SK-N-SH (cell line): ENCODE measurements at regions of chr22 and their contacts with region 1.

Region 1: DNA sequence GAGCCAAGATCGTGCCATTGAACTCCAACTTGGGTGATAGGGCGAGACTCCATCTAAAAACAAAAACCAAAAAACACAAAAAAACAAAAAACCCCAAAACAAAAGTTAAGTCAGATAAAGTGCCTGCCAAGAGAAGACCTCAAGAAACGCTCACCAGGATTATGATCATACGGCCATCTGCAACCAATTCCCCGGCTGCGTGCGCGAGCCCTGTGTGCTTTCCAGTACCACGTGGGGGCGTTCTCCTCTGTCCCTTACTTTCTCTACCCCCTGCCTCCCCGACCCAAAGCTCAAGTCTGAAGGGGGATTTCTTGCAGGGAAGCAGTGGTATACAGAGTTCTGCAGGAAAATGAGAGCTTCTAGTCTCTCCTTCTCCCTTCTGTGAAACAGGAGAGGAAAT is 10.5 kb upstream of the RPS19BP1 start:
- DNase-seq: peak; percentile 72
- H3K4me3 ChIP-seq: no peak overlapping the region; a peak in 1 of 4 replicates
- H3K27ac ChIP-seq: no peak overlapping the region
- H3K4me1 ChIP-seq: no peaks in the 10 kb centered on the region; a peak in 1 of 4 replicates
- H3K27me3 ChIP-seq: no peaks in the 10 kb centered on the region
- CTCF ChIP-seq: peak; percentile 54
- EP300 ChIP-seq: no peak
- RAD21 ChIP-seq: peak; percentile 64

Region 2: GRCh38 chr22:39565491-39565890 is 22.4 kb after region 1 on chr22:
- CTCF ChIA-PET with region 1: no interaction called
- POLR2A ChIA-PET with region 1: no interaction called
- DNase-seq: no peak
- H3K4me3 ChIP-seq: no peak overlapping the region
- H3K27ac ChIP-seq: no peak overlapping the region
- H3K4me1 ChIP-seq: no peaks in the 10 kb centered on the region
- H3K27me3 ChIP-seq: no peaks in the 10 kb centered on the region
- CTCF ChIP-seq: no peak
- EP300 ChIP-seq: no peak
- RAD21 ChIP-seq: no peak

Region 3: DNA sequence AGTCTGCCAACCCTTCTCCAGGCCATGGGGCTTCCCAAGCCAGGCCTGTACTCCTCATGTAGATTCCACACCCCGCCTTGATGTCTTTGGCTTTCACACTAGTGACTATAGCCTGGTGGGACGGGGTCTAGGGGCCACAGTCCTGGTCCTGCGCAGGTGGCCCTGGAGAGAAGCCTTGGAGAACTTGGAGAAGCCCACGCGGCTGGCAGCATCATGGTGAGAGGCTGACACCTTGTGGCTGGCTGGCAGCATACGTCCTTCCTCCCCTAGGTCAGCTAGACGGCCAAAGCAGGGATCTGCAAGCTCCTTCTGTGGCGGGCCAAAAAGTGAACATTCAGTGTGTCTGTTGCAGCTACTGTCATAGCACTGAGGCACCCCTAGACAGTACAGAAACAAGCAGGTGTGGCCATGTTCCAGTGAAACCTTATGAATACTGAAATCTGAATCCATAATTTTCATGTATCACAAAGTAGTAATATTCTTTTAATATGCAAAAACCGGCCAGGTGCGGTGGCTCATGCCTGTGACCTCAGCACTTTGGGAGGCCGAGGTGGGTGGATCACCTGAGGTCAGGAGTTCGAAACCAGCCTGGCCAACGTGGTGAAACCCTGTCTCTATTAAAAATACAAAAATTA is 493.6 kb after region 1 on chr22:
- CTCF ChIA-PET with region 1: interaction called, 32 read pairs
- POLR2A ChIA-PET with region 1: no interaction called
- DNase-seq: peak; percentile 70
- H3K4me3 ChIP-seq: peak overlapping the region in 1 of 2 experiments; percentile 26; a peak in 1 of 4 replicates
- H3K27ac ChIP-seq: no peak overlapping the region
- H3K4me1 ChIP-seq: peaks cover 4 to 6% of the 10 kb centered on the region in 2 experiments; a peak in 2 of 4 replicates
- H3K27me3 ChIP-seq: no peaks in the 10 kb centered on the region
- CTCF ChIP-seq: peak; percentile 65
- EP300 ChIP-seq: no peak
- RAD21 ChIP-seq: peak; percentile 88

Region 4: GRCh38 chr22:40044102-40044869 is 501.2 kb after region 1 on chr22:
- CTCF ChIA-PET with region 1: interaction called, 11 read pairs
- POLR2A ChIA-PET with region 1: no interaction called
- DNase-seq: peak; percentile 89
- H3K4me3 ChIP-seq: peak overlapping the region; percentile 64 to 72
- H3K27ac ChIP-seq: peak overlapping the region; percentile 83 to 87
- H3K4me1 ChIP-seq: peaks cover 8 to 12% of the 10 kb centered on the region in 2 experiments; a peak in 2 of 4 replicates
- H3K27me3 ChIP-seq: no peaks in the 10 kb centered on the region
- CTCF ChIP-seq: no peak
- EP300 ChIP-seq: no peak
- RAD21 ChIP-seq: no peak